CD14-positive monocyte (primary cell): ENCODE measurements at regions of chr6 and their contacts with region 1.

Region 1: GRCh38 chr6:118580585-118581419 is 32.7 kb downstream of the PLN start:
- DNase-seq: peak; percentile 44 to 71 (median 69)
- H3K4me3 ChIP-seq: no peak overlapping the region
- H3K4me3 Mint-ChIP-seq: peak overlapping the region in 1 of 2 donors; percentile 72
- H3K27ac ChIP-seq: peak overlapping the region; percentile 47 to 82
- H3K27ac Mint-ChIP-seq: peak overlapping the region; percentile 79 to 94 (median 91)
- H3K4me1 ChIP-seq: peaks cover 28 to 33% of the 10 kb centered on the region in 2 donors
- H3K4me1 Mint-ChIP-seq: peaks cover 34% of the 10 kb centered on the region
- H3K27me3 ChIP-seq: no peaks in the 10 kb centered on the region
- H3K27me3 Mint-ChIP-seq: no peaks in the 10 kb centered on the region
- CTCF ChIP-seq: peak; percentile 83

Region 2: DNA sequence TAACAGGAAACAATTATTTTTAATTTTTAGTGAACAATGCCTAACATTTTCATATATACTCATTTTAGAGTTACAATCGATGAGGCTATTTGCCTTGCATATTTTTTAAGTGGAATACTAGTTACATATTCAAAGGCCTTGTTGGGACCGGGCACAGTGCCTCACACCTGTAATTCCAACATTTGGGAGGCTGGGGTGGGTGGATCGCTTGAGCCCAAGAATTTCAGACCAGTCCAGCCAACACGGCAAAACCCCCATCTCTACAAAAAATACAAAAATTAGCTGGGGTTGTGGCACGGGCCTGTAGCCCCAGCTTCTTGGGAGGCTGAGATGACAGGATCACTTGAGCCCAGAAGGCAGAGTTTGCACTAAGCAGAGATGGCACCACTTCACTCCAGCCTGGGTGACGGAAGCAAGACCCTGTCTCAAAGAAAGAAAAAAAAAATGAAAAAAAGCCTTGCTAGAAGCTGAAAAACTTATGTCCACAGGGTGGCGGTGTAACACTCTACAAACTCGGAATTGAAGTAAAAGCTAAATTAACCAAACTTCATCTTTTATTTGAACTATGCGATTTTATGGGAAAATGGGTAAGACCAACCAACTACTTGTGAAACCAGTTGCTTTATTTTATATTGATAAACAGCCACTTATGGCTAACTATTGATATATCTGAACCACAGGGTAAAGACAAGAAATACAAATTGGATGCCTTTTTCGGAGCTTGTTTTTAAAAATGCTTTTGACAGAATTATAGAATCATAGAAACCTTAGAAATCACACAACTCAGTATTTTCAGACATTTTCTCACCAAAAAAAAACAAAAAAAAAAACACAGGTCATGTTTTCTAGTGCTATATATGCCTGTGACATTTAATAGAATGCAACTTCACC is 1131.0 kb before region 1 on chr6:
- intact Hi-C with region 1: loop called in 1 of 2 experiments (anchors 10 kb)
- DNase-seq: peak; percentile 33 to 52 (median 50)
- H3K4me3 ChIP-seq: no peak overlapping the region
- H3K4me3 Mint-ChIP-seq: no peak overlapping the region
- H3K27ac ChIP-seq: no peak overlapping the region
- H3K27ac Mint-ChIP-seq: no peak overlapping the region
- H3K4me1 ChIP-seq: peaks cover 8% of the 10 kb centered on the region in 2 donors
- H3K4me1 Mint-ChIP-seq: peaks cover 12% of the 10 kb centered on the region
- H3K27me3 ChIP-seq: peaks cover 5% of the 10 kb centered on the region in 2 donors
- H3K27me3 Mint-ChIP-seq: peaks cover 15 to 28% (median 21%) of the 10 kb centered on the region in 3 donors
- CTCF ChIP-seq: peak; percentile 79